ENCODE measurements at regions of chr13 and their contacts with region 1.

Region 1: GRCh38 chr13:106874323-106874722 is 306.4 kb upstream of the ARGLU1 start:
- DNase-seq: no peak
- ATAC-seq: peak in 7 of 8 donors; percentile 48 to 82 (median 75)
- H3K4me3 ChIP-seq: no peak overlapping the region
- H3K27ac ChIP-seq: peak overlapping the region in 8 of 10 donors; percentile 1 to 80 (median 50)
- H3K4me1 ChIP-seq: peaks cover 0 to 27% (median 6%) of the 10 kb centered on the region in 9 donors
- H3K27me3 ChIP-seq: no peaks in the 10 kb centered on the region
- CTCF ChIP-seq: no peak

Region 2: GRCh38 chr13:106709522-106709921 is 164.8 kb before region 1 on chr13:
- intact Hi-C with region 1: loop called in 1 of 10 experiments (anchors 5 kb)
- DNase-seq: peak in 1 of 2 donors; percentile 54
- ATAC-seq: peak; percentile 70 to 92 (median 88)
- H3K4me3 ChIP-seq: peak overlapping the region in 8 of 10 donors; percentile 19 to 50 (median 40)
- H3K27ac ChIP-seq: peak overlapping the region; percentile 65 to 90 (median 82)
- H3K4me1 ChIP-seq: peaks cover 0 to 67% (median 17%) of the 10 kb centered on the region in 9 donors
- H3K27me3 ChIP-seq: no peaks in the 10 kb centered on the region
- CTCF ChIP-seq: no peak

Region 3: GRCh38 chr13:106736986-106737385 is 137.3 kb before region 1 on chr13:
- intact Hi-C with region 1: no loop called
- DNase-seq: no peak
- ATAC-seq: no peak
- H3K4me3 ChIP-seq: no peak overlapping the region
- H3K27ac ChIP-seq: no peak overlapping the region
- H3K4me1 ChIP-seq: peaks cover 0 to 20% (median 0%) of the 10 kb centered on the region in 9 donors
- H3K27me3 ChIP-seq: peaks cover 0 to 6% (median 0%) of the 10 kb centered on the region in 7 donors
- CTCF ChIP-seq: no peak

Measured in heart right ventricle (tissue), 16 donors.